SK-N-SH (cell line): ENCODE measurements at regions of chr6 and their contacts with region 1.

Region 1: GRCh38 chr6:52020945-52021570 is 66.4 kb downstream of the PKHD1 start:
- DNase-seq: peak; percentile 14
- H3K4me3 ChIP-seq: no peak overlapping the region; a peak in 1 of 4 replicates
- H3K27ac ChIP-seq: peak overlapping the region in 1 of 2 experiments; percentile 99; a peak in 2 of 4 replicates
- H3K4me1 ChIP-seq: peaks cover 0 to 31% of the 10 kb centered on the region in 2 experiments; a peak in 2 of 4 replicates
- H3K27me3 ChIP-seq: no peaks in the 10 kb centered on the region; the same call in 1 of the 2 replicates
- CTCF ChIP-seq: peak; percentile 87
- EP300 ChIP-seq: no peak
- RAD21 ChIP-seq: peak; percentile 91

Region 2: GRCh38 chr6:51972659-51973058 is 48.4 kb before region 1 on chr6:
- CTCF ChIA-PET with region 1: interaction called, 6 read pairs
- POLR2A ChIA-PET with region 1: interaction called, 11 read pairs
- DNase-seq: peak; percentile 64
- H3K4me3 ChIP-seq: no peak overlapping the region
- H3K27ac ChIP-seq: peak overlapping the region in 1 of 2 experiments; percentile 99; a peak in 2 of 4 replicates
- H3K4me1 ChIP-seq: peaks cover 0 to 7% of the 10 kb centered on the region in 2 experiments; a peak in 2 of 4 replicates
- H3K27me3 ChIP-seq: no peaks in the 10 kb centered on the region
- CTCF ChIP-seq: no peak
- EP300 ChIP-seq: peak; percentile 19 to 100; a peak in 3 of 4 replicates
- RAD21 ChIP-seq: peak; percentile 32

Region 3: GRCh38 chr6:52009466-52010140 is 11.5 kb before region 1 on chr6:
- CTCF ChIA-PET with region 1: interaction called, 11 read pairs
- POLR2A ChIA-PET with region 1: interaction called, 4 read pairs
- DNase-seq: peak; percentile 53
- H3K4me3 ChIP-seq: no peak overlapping the region; a peak in 1 of 4 replicates
- H3K27ac ChIP-seq: peak overlapping the region in 1 of 2 experiments; percentile 100; a peak in 2 of 4 replicates
- H3K4me1 ChIP-seq: peaks cover 0 to 34% of the 10 kb centered on the region in 2 experiments; a peak in 2 of 4 replicates
- H3K27me3 ChIP-seq: no peaks in the 10 kb centered on the region; the same call in 1 of the 2 replicates
- CTCF ChIP-seq: no peak
- EP300 ChIP-seq: no peak; a peak in 1 of 4 replicates
- RAD21 ChIP-seq: no peak

Region 4: GRCh38 chr6:52087498-52087999 is 66.5 kb after region 1 on chr6 and contains the start of gene PKHD1:
- CTCF ChIA-PET with region 1: no interaction called
- POLR2A ChIA-PET with region 1: no interaction called
- DNase-seq: peak; percentile 24
- H3K4me3 ChIP-seq: no peak within 1 kb of the TSS
- H3K27ac ChIP-seq: no peak within 1 kb of the TSS
- H3K4me1 ChIP-seq: no peaks in the 10 kb centered on the region
- H3K27me3 ChIP-seq: no peaks in the 10 kb centered on the region
- CTCF ChIP-seq: peak; percentile 47
- EP300 ChIP-seq: no peak
- RAD21 ChIP-seq: 0 out of 2 replicates have a peak, but pooled peaks have one; percentile 12
- polyA plus RNA-seq, gene PKHD1: under 0.01 TPM in 1 of 2 replicates, not detected in the other